ENCODE measurements at regions of chr22 and their contacts with region 1.

Region 1: GRCh38 chr22:35930933-35931332 is 97.7 kb downstream of the RBFOX2 start:
- DNase-seq: no peak
- ATAC-seq: peak; percentile 96

Region 2: DNA sequence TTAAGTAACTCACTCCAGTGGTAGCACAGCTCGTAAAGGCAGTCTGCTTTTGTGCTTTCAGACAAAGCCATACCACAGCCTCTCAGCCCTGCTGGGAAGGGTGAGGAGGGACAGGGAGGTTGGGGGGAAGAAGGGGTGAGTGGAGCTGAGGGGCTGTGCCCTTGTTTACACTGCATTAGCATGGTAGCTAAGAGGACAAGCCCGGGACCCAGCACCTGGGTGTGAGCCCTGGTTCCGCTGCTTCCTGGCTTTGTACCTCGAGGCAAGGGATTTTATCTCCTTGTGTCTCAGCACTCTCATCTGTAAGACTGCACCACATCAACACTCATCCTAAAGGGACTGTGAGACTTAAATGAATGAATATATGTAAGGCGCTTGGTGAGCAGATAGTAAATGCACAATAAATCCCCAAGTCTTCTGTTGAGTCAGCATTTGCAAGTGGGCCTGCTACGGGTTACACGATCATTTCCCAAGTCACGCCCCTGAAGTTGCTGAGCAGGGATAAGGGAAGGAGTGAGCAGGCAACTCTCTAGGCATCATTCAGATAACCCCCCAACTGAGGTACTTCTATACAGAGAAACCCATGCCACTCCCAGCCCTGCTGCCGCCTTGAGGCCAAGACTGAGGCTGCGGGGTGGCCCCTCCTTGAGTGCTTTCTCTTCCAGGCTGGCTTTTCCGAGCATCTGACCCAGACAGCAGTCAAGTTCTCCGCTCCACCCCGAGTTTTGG is 382.8 kb before region 1 on chr22:
- intact Hi-C with region 1: no loop called
- DNase-seq: no peak
- ATAC-seq: no peak

Region 3: DNA sequence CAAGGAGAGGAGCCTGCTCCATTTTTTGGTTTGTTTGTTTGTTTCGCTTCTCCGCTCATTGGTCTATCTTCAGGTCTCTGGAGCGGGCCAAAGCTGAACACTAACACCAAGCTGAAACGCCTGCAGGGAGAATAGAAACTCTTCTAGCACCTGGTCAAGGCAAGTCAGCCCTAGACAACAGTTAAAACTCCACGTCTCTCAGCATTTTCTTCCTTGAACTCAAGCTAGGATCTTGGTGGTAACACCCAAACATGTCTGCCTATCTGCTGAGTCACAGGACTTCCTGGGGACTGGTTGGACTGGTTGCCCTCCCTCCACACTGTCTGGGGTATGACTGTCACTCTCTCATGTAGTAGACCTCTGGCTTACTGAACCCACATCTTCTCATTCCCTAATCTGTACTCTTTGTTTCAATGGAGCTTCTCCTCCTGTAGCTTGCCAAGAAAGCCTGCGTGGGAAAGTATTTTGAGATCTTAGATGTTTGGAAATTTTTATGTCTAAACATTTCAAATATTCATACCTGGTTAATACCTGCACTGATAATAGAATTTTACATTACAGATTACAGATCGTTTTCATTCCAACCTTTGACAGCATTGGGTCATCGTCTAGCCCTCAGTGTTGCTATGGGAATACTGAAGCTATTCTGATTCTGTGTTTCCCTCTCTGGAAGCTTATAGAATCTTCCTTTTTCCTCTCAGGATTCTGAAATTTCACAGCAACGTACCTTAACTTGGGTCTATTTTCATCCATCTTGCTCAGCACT is 121.8 kb after region 1 on chr22:
- intact Hi-C with region 1: no loop called
- DNase-seq: no peak
- ATAC-seq: no peak

Region 4: GRCh38 chr22:36065775-36066559 is 135.0 kb after region 1 on chr22:
- intact Hi-C with region 1: loop called (anchors 5 kb)
- DNase-seq: peak; percentile 93
- ATAC-seq: peak; percentile 93

Region 5: DNA sequence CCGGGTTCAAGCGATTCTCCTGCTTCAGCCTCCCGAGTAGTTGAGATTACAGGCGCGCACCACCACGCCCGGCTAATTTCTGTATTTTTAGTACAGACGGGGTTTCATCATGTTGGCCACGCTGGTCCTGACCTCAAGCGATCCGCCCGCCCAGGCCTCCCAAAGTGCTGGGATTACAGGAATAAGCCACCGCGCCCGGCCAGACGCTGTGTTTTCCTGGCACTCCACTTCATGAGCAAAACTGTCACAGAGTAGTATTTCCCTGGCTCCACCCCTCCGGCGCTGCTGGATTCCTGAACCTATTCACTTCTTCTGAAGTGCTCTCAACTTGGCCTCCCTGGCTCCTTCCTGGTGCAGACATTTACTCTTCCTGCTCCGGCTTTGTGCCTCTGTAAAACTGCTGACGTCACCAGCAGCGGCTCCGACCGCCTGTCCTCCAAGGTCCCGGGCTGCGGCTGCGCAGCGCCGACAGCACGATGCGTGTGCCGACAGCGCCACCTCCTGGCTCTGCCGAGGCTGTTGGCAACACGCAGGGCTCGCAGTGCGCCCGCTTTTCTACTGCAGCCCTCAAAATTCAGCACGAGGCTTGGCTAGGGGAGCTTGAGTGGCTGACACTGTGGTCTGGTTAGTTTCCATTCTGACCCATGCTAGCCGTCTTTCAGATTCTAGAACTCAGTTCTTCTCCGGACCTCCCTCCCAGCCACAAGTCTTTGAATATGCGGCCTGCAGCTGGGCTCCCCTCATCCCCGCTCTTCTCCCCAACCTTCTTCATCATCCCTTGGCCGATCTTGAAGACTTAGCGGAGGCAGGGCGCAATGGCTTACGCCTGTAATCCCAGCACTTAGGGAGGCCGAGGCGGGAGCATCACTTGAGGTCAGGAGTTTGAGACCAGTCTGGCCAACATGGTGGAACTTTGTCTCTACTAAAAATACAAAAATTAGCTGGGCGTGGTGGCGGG is 193.0 kb after region 1 on chr22:
- intact Hi-C with region 1: loop called (anchors 5 kb)
- DNase-seq: peak; percentile 97
- ATAC-seq: peak; percentile 98